ENCODE measurements at regions of chr13 and their contacts with region 1.

Region 1: GRCh38 chr13:77329133-77329910 is 2.4 kb upstream of the MYCBP2 start:
- DNase-seq: peak; percentile 81 to 89
- ATAC-seq: peak; percentile 77 to 80 (median 78)
- H3K4me3 ChIP-seq: peak overlapping the region; percentile 79
- H3K27ac ChIP-seq: peak overlapping the region; percentile 85
- H3K4me1 ChIP-seq: peaks cover 29% of the 10 kb centered on the region
- H3K27me3 ChIP-seq: no peaks in the 10 kb centered on the region
- CTCF ChIP-seq: no peak

Region 2: DNA sequence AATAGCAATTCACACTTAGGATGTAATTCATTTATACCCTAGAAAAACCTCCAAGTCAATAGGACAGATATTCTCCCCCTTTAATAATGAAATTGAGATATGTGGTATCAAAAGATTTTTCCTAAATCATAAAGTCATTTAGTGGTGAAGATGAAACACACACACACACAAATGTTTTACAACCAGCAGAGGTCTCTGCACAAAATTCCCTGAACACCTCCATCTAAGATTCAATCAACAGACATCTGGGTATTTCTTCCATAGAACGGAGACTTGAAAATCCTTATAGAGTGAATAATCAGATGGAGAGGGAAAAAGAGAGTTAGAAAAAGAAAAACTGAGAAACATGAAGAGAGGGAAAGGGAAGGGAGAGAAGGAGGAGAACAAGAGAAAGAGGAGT is 55.2 kb before region 1 on chr13:
- intact Hi-C with region 1: loop called in 1 of 2 experiments (anchors 10 kb)
- DNase-seq: no peak
- ATAC-seq: no peak
- H3K4me3 ChIP-seq: no peak overlapping the region
- H3K27ac ChIP-seq: no peak overlapping the region
- H3K4me1 ChIP-seq: no peaks in the 10 kb centered on the region
- H3K27me3 ChIP-seq: no peaks in the 10 kb centered on the region
- CTCF ChIP-seq: no peak

Region 3: DNA sequence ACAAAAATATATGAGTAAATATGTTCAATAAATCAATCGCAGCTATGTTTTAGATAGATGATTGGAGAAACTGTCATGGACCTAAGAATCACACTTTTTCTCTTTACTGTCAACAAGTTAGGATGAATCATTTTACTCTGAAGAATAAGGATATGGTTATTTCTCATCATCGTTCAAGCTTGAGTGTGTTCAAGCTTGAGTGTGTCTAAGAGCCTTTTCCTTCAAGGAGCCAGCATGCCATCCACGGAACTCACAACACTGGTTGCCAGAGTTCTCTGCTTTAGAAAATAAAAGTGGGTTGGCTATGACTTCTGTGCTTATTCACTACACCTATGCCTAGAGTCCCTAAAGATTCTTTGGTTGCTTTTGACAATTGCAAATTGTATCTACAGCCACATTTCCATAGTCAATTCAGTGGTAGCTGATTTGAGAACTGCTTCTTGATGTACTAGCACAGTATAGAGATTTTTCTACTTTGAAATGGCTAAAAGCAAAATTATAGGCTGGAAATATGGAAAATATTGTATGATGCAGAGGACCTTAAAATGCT is 148.1 kb after region 1 on chr13:
- intact Hi-C with region 1: loop called (anchors 5 to 10 kb)
- DNase-seq: no peak
- ATAC-seq: peak in 1 of 4 donors; percentile 37
- H3K4me3 ChIP-seq: peak overlapping the region; percentile 63
- H3K27ac ChIP-seq: peak overlapping the region; percentile 46
- H3K4me1 ChIP-seq: peaks cover 7% of the 10 kb centered on the region
- H3K27me3 ChIP-seq: no peaks in the 10 kb centered on the region
- CTCF ChIP-seq: no peak

Region 4: GRCh38 chr13:77506874-77507273 is 177.6 kb after region 1 on chr13:
- intact Hi-C with region 1: no loop called
- DNase-seq: no peak
- ATAC-seq: no peak
- H3K4me3 ChIP-seq: no peak overlapping the region
- H3K27ac ChIP-seq: no peak overlapping the region
- H3K4me1 ChIP-seq: no peaks in the 10 kb centered on the region
- H3K27me3 ChIP-seq: peaks cover 0 to 2% (median 0%) of the 10 kb centered on the region in 3 donors
- CTCF ChIP-seq: peak; percentile 30

Region 5: DNA sequence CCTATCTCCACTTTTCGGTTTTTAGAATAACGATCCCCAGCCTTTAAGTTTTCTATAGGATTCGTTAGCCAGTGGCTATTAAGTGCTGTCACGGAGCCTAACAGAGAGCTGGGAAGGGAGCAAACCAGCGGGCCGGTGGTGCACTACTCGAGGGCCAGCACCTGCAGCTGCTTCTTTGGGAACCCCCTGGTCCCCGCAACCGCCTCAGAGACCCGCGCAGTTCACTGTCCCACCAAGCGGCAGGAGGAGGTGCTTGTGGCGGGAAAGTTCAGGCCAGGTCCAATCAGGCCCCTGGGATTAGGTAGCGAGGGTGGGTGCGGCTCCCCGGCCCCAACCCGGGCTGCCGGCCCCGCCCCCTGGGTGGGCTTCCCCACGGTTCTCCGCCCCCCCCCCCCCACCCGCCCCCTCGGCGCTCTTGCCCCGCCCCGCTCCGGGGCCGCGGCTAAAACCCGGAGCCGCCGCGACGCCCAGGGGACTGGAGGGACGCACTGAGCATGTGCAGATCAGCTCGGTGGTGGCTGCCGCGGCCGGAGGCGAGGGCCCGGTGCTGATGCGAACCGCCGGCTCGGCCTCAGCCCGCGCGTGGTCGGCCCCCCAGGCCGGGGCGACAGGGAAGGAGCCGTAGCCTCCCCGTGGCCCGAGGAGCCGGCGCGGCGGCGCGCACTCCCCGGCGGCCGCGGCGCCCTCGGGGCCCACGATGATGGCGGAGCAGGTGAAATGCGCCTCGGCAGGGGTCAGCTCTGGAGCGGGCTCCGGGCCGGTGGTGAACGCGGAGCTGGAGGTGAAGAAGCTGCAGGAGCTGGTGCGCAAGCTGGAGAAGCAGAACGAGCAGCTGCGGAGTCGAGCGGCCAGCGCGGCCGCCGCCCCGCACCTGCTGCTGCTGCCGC is 368.1 kb after region 1 on chr13 and contains the start of gene SLAIN1:
- intact Hi-C with region 1: loop called in 1 of 2 experiments (anchors 10 kb)
- DNase-seq: peak; percentile 81 to 91
- ATAC-seq: peak; percentile 92 to 96 (median 96)
- H3K4me3 ChIP-seq: peak within 1 kb of the TSS; percentile 82
- H3K27ac ChIP-seq: no peak within 1 kb of the TSS
- H3K4me1 ChIP-seq: peaks cover 6% of the 10 kb centered on the region
- H3K27me3 ChIP-seq: no peaks in the 10 kb centered on the region
- CTCF ChIP-seq: no peak
- total RNA-seq, gene SLAIN1: 3.1 to 6.6 (median 4.2) TPM